HepG2 (cell line): ENCODE measurements at regions of chr7 and their contacts with region 1.

Region 1: GRCh38 chr7:90945104-90945787 is 319.0 kb upstream of the FZD1 start:
- DNase-seq: no peak
- ATAC-seq: no peak
- H3K4me3 ChIP-seq: no peak overlapping the region
- H3K27ac ChIP-seq: no peak overlapping the region
- H3K4me1 ChIP-seq: no peaks in the 10 kb centered on the region
- H3K27me3 ChIP-seq: no peaks in the 10 kb centered on the region
- CTCF ChIP-seq: no peak
- EP300 ChIP-seq: no peak
- POLR2A ChIP-seq: no peak
- RAD21 ChIP-seq: no peak

Region 2: GRCh38 chr7:89495704-89496103 is 1449.5 kb before region 1 on chr7:
- CTCF ChIA-PET with region 1: no interaction called
- POLR2A ChIA-PET with region 1: no interaction called
- in situ Hi-C with region 1: no loop called
- intact Hi-C with region 1: loop called (anchors 10 kb)
- DNase-seq: no peak
- ATAC-seq: no peak
- H3K4me3 ChIP-seq: no peak overlapping the region
- H3K27ac ChIP-seq: no peak overlapping the region
- H3K4me1 ChIP-seq: no peaks in the 10 kb centered on the region
- H3K27me3 ChIP-seq: no peaks in the 10 kb centered on the region
- CTCF ChIP-seq: no peak
- EP300 ChIP-seq: no peak
- POLR2A ChIP-seq: no peak
- RAD21 ChIP-seq: no peak

Region 3: GRCh38 chr7:90857603-90858002 is 87.6 kb before region 1 on chr7:
- CTCF ChIA-PET with region 1: no interaction called
- POLR2A ChIA-PET with region 1: no interaction called
- in situ Hi-C with region 1: no loop called
- intact Hi-C with region 1: no loop called
- DNase-seq: no peak
- ATAC-seq: no peak
- H3K4me3 ChIP-seq: no peak overlapping the region
- H3K27ac ChIP-seq: no peak overlapping the region
- H3K4me1 ChIP-seq: no peaks in the 10 kb centered on the region
- H3K27me3 ChIP-seq: no peaks in the 10 kb centered on the region
- CTCF ChIP-seq: no peak
- EP300 ChIP-seq: no peak
- POLR2A ChIP-seq: no peak
- RAD21 ChIP-seq: no peak